Transverse colon (tissue), 4 donors: ENCODE measurements at regions of chr6 and their contacts with region 1.

Region 1: DNA sequence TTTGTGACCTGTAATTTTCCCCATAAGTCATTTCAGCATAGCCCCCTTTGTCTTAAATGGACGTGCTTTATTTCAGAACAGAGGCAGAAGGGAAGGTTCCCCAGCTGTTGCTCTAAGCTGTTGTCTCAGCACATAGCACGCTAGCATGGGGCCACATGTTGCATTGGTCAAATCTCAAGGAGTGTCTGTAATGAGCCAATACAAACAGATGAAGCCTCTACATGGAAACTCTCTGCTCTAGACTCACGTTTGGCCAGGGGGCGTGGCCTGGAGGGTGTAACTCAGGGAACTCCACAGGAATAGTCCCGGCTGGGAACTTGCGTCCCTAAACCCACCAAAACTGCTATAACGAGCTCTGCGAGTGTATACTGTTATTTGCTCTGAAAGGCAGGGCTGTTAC is 35.2 kb upstream of the SLC22A2 start:
- DNase-seq: peak; percentile 31
- H3K4me3 ChIP-seq: no peak overlapping the region
- H3K27ac ChIP-seq: no peak overlapping the region
- H3K4me1 ChIP-seq: no peaks in the 10 kb centered on the region
- H3K27me3 ChIP-seq: no peaks in the 10 kb centered on the region
- CTCF ChIP-seq: no peak
- EP300 ChIP-seq: no peak
- POLR2A ChIP-seq: no peak

Region 2: GRCh38 chr6:159979136-159979874 is 314.5 kb before region 1 on chr6:
- in situ Hi-C with region 1: no loop called
- intact Hi-C with region 1: no loop called
- DNase-seq: peak; percentile 47
- H3K4me3 ChIP-seq: no peak overlapping the region
- H3K27ac ChIP-seq: peak overlapping the region; percentile 30 to 71 (median 60)
- H3K4me1 ChIP-seq: peaks cover 40 to 90% (median 65%) of the 10 kb centered on the region in 4 donors
- H3K27me3 ChIP-seq: no peaks in the 10 kb centered on the region
- CTCF ChIP-seq: no peak
- EP300 ChIP-seq: no peak
- POLR2A ChIP-seq: no peak

Region 3: GRCh38 chr6:160343144-160343543 is 49.3 kb after region 1 on chr6:
- in situ Hi-C with region 1: no loop called
- intact Hi-C with region 1: loop called (anchors 2 kb)
- DNase-seq: no peak
- H3K4me3 ChIP-seq: no peak overlapping the region
- H3K27ac ChIP-seq: no peak overlapping the region
- H3K4me1 ChIP-seq: peaks cover 0 to 4% (median 0%) of the 10 kb centered on the region in 4 donors
- H3K27me3 ChIP-seq: peaks cover 3% of the 10 kb centered on the region
- CTCF ChIP-seq: no peak
- EP300 ChIP-seq: no peak
- POLR2A ChIP-seq: no peak

Region 4: GRCh38 chr6:160386869-160387530 is 93.2 kb after region 1 on chr6:
- in situ Hi-C with region 1: no loop called
- intact Hi-C with region 1: no loop called
- DNase-seq: peak; percentile 35
- H3K4me3 ChIP-seq: no peak overlapping the region
- H3K27ac ChIP-seq: peak overlapping the region in 2 of 4 donors; percentile 21 to 47
- H3K4me1 ChIP-seq: peaks cover 0 to 19% (median 4%) of the 10 kb centered on the region in 4 donors
- H3K27me3 ChIP-seq: no peaks in the 10 kb centered on the region
- CTCF ChIP-seq: peak in 1 of 5 experiments; percentile 13
- EP300 ChIP-seq: no peak
- POLR2A ChIP-seq: no peak

Region 5: GRCh38 chr6:160714731-160715316 is 421.0 kb after region 1 on chr6:
- in situ Hi-C with region 1: no loop called
- intact Hi-C with region 1: no loop called
- DNase-seq: no peak
- H3K4me3 ChIP-seq: no peak overlapping the region
- H3K27ac ChIP-seq: no peak overlapping the region
- H3K4me1 ChIP-seq: no peaks in the 10 kb centered on the region
- H3K27me3 ChIP-seq: no peaks in the 10 kb centered on the region
- CTCF ChIP-seq: no peak
- EP300 ChIP-seq: no peak
- POLR2A ChIP-seq: no peak